ENCODE measurements at regions of chr5 and their contacts with region 1.

Region 1: GRCh38 chr5:134784241-134784920 is 25.8 kb downstream of the DDX46 start:
- DNase-seq: peak; percentile 33
- ATAC-seq: no peak; the same call in none of the 2 replicates
- H3K4me3 ChIP-seq: no peak overlapping the region
- H3K27ac ChIP-seq: no peak overlapping the region
- H3K4me1 ChIP-seq: peaks cover 8% of the 10 kb centered on the region
- H3K27me3 ChIP-seq: no peaks in the 10 kb centered on the region
- CTCF ChIP-seq: peak; percentile 39
- POLR2A ChIP-seq: no peak
- RAD21 ChIP-seq: 0 out of 2 replicates have a peak, but pooled peaks have one; percentile 25

Region 2: GRCh38 chr5:134724872-134725271 is 59.5 kb before region 1 on chr5:
- CTCF ChIA-PET with region 1: no interaction called
- POLR2A ChIA-PET with region 1: no interaction called
- dilution Hi-C with region 1: no loop called
- in situ Hi-C with region 1: no loop called
- intact Hi-C with region 1: no loop called
- DNase-seq: no peak
- ATAC-seq: no peak
- H3K4me3 ChIP-seq: no peak overlapping the region
- H3K27ac ChIP-seq: no peak overlapping the region
- H3K4me1 ChIP-seq: no peaks in the 10 kb centered on the region
- H3K27me3 ChIP-seq: no peaks in the 10 kb centered on the region
- CTCF ChIP-seq: no peak
- POLR2A ChIP-seq: no peak
- RAD21 ChIP-seq: no peak

Region 3: GRCh38 chr5:134803821-134804220 is 19.4 kb after region 1 on chr5:
- CTCF ChIA-PET with region 1: no interaction called
- POLR2A ChIA-PET with region 1: interaction called, 20 read pairs
- dilution Hi-C with region 1: no loop called
- in situ Hi-C with region 1: no loop called
- intact Hi-C with region 1: no loop called
- DNase-seq: no peak
- ATAC-seq: no peak
- H3K4me3 ChIP-seq: no peak overlapping the region
- H3K27ac ChIP-seq: no peak overlapping the region
- H3K4me1 ChIP-seq: no peaks in the 10 kb centered on the region
- H3K27me3 ChIP-seq: no peaks in the 10 kb centered on the region
- CTCF ChIP-seq: no peak
- POLR2A ChIP-seq: no peak
- RAD21 ChIP-seq: no peak

Region 4: DNA sequence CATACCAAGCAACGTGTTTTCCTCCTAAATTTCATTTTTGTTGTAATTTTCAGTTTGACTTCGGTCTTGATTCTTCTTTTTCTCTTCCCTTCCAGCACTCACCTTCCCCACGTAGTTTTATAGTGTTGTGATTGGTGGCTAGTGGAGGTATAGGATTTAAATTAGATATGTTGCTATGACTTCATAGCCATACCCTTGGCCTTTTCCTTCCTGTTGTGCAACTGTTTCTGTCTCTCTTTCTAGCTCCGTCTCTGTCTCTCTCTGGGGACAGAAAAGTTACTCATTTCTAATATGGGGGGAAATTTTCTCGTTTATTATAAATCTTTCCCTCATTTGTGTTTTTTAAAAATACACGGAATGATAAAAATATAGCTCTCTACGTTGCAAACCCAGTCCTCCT is 40.8 kb after region 1 on chr5:
- CTCF ChIA-PET with region 1: no interaction called
- POLR2A ChIA-PET with region 1: no interaction called
- dilution Hi-C with region 1: no loop called
- in situ Hi-C with region 1: no loop called
- intact Hi-C with region 1: loop called (anchors 5 kb)
- DNase-seq: no peak
- ATAC-seq: no peak
- H3K4me3 ChIP-seq: no peak overlapping the region
- H3K27ac ChIP-seq: no peak overlapping the region
- H3K4me1 ChIP-seq: no peaks in the 10 kb centered on the region
- H3K27me3 ChIP-seq: no peaks in the 10 kb centered on the region
- CTCF ChIP-seq: no peak
- POLR2A ChIP-seq: no peak
- RAD21 ChIP-seq: no peak

Region 5: GRCh38 chr5:134851307-134851923 is 67.0 kb after region 1 on chr5:
- CTCF ChIA-PET with region 1: no interaction called
- POLR2A ChIA-PET with region 1: no interaction called
- dilution Hi-C with region 1: no loop called
- in situ Hi-C with region 1: no loop called
- intact Hi-C with region 1: loop called (anchors 1 kb)
- DNase-seq: peak; percentile 56
- ATAC-seq: peak; percentile 53; the same call in 1 of the 2 replicates
- H3K4me3 ChIP-seq: no peak overlapping the region
- H3K27ac ChIP-seq: peak overlapping the region; percentile 53; the same call in 1 of the 2 replicates
- H3K4me1 ChIP-seq: peaks cover 9% of the 10 kb centered on the region
- H3K27me3 ChIP-seq: no peaks in the 10 kb centered on the region
- CTCF ChIP-seq: peak; percentile 63
- POLR2A ChIP-seq: no peak
- RAD21 ChIP-seq: peak; percentile 70